ENCODE measurements at regions of chr18 and their contacts with region 1.

Region 1: GRCh38 chr18:69845593-69846506 is 101.8 kb downstream of the CD226 start:
- DNase-seq: peak in 2 of 9 donors; percentile 5 to 12
- ATAC-seq: no peak
- H3K4me3 ChIP-seq: no peak overlapping the region
- H3K4me3 Mint-ChIP-seq: no peak overlapping the region
- H3K27ac ChIP-seq: no peak overlapping the region
- H3K27ac Mint-ChIP-seq: peak overlapping the region in 1 of 9 donors; percentile 4
- H3K4me1 ChIP-seq: no peaks in the 10 kb centered on the region
- H3K4me1 Mint-ChIP-seq: peaks cover 0 to 3% (median 0%) of the 10 kb centered on the region in 7 donors
- H3K27me3 ChIP-seq: no peaks in the 10 kb centered on the region
- H3K27me3 Mint-ChIP-seq: no peaks in the 10 kb centered on the region

Region 2: DNA sequence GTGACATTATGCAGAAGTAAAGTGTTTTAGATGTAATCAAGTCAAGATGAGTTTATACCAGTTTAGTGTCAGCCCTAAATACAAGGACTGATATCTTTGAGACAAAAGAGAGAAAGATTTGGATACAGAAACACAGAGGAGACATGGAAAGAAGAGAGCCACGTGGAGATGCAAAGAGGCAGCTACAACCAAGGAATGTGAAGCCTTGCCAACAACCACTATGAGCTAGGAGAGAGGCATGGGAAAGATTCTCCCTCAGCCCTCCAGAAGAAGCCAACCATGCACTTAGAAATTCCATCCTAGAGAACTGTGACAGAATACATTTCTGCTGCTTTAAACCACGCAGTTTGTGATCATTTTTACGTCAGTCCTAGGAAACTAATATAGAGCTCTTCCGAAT is 228.0 kb before region 1 on chr18:
- CTCF ChIA-PET with region 1: no interaction called
- POLR2A ChIA-PET with region 1: no interaction called
- intact Hi-C with region 1: no loop called
- DNase-seq: no peak
- ATAC-seq: no peak
- H3K4me3 ChIP-seq: no peak overlapping the region
- H3K4me3 Mint-ChIP-seq: no peak overlapping the region
- H3K27ac ChIP-seq: no peak overlapping the region
- H3K27ac Mint-ChIP-seq: no peak overlapping the region
- H3K4me1 ChIP-seq: no peaks in the 10 kb centered on the region
- H3K4me1 Mint-ChIP-seq: no peaks in the 10 kb centered on the region
- H3K27me3 ChIP-seq: peaks cover 0 to 3% of the 10 kb centered on the region in 2 donors
- H3K27me3 Mint-ChIP-seq: peaks cover 0 to 13% (median 5%) of the 10 kb centered on the region in 5 donors

Region 3: DNA sequence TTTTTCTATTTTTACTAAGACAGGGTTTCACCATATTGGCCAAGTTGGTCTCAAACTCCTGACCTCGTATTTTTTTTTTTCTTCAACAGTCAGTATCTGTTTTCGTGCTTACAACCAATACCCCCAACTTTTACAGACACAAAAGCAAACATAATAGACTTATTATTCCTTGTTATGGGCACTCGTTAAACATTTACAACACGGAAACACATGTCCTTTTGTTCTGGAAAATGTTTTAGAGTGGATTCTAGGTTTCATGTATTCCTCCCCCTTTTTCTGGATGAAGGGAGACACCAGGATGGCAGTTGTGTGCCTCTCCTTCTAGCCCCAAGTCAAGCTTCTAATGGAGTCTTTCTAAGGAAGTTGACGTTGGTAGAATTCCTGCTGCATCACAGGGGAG is 13.0 kb after region 1 on chr18:
- CTCF ChIA-PET with region 1: no interaction called
- POLR2A ChIA-PET with region 1: no interaction called
- intact Hi-C with region 1: no loop called
- DNase-seq: no peak
- ATAC-seq: no peak
- H3K4me3 ChIP-seq: no peak overlapping the region
- H3K4me3 Mint-ChIP-seq: no peak overlapping the region
- H3K27ac ChIP-seq: no peak overlapping the region
- H3K27ac Mint-ChIP-seq: peak overlapping the region in 1 of 9 donors; percentile 33
- H3K4me1 ChIP-seq: no peaks in the 10 kb centered on the region
- H3K4me1 Mint-ChIP-seq: peaks cover 0 to under 1% (median 0%) of the 10 kb centered on the region in 7 donors
- H3K27me3 ChIP-seq: no peaks in the 10 kb centered on the region
- H3K27me3 Mint-ChIP-seq: no peaks in the 10 kb centered on the region

Region 4: DNA sequence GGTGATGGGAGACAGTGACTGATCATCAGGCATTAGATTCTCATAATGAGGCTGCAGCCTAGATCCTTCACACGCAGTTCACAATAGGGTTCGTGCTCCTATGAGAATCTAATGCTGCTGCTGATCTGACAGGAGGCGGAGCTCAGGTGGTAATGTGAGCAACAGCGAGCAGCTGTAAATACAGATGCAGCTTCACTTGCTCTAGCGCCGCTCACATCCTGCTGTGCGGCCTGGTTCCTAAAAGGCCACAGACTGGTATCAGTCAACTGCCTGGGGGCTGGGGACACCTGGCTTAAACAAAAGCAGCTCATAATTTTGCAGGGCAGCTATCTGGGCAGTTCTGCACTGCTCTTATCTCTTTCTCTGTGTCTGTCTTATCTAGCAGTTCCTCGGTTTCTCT is 122.2 kb after region 1 on chr18:
- CTCF ChIA-PET with region 1: no interaction called
- POLR2A ChIA-PET with region 1: no interaction called
- intact Hi-C with region 1: no loop called
- DNase-seq: peak in 5 of 9 donors; percentile 19 to 64 (median 51)
- ATAC-seq: peak; percentile 87
- H3K4me3 ChIP-seq: no peak overlapping the region
- H3K4me3 Mint-ChIP-seq: peak overlapping the region in 6 of 10 donors; percentile 3 to 36 (median 26)
- H3K27ac ChIP-seq: peak overlapping the region; percentile 51
- H3K27ac Mint-ChIP-seq: peak overlapping the region; percentile 3 to 93 (median 80)
- H3K4me1 ChIP-seq: peaks cover 3 to 12% of the 10 kb centered on the region in 2 donors
- H3K4me1 Mint-ChIP-seq: peaks cover 12 to 19% (median 17%) of the 10 kb centered on the region in 7 donors
- H3K27me3 ChIP-seq: no peaks in the 10 kb centered on the region
- H3K27me3 Mint-ChIP-seq: no peaks in the 10 kb centered on the region

Region 5: DNA sequence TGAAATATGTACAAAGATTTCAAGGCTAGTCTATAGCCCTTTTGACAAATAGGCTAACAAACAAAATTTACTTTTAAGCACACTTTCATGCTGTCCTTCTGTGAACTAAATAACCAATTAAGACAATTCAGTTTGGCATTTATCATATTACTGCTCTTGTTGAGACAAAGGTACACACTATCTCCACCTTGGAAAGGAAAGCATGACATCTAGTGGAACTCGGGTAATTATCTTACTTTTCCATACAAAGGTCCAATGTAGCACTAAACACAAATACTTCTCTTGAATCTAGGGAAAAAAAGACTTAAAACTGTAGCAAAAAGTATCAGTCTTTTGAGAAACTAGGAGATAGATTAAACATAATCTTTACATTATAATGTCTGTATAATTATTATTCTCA is 226.8 kb after region 1 on chr18:
- CTCF ChIA-PET with region 1: no interaction called
- POLR2A ChIA-PET with region 1: no interaction called
- intact Hi-C with region 1: loop called (anchors 1 to 5 kb)
- DNase-seq: peak in 3 of 9 donors; percentile 3 to 35 (median 3)
- ATAC-seq: no peak
- H3K4me3 ChIP-seq: no peak overlapping the region
- H3K4me3 Mint-ChIP-seq: no peak overlapping the region
- H3K27ac ChIP-seq: no peak overlapping the region
- H3K27ac Mint-ChIP-seq: no peak overlapping the region
- H3K4me1 ChIP-seq: no peaks in the 10 kb centered on the region
- H3K4me1 Mint-ChIP-seq: peaks cover 0 to 6% (median 4%) of the 10 kb centered on the region in 7 donors
- H3K27me3 ChIP-seq: no peaks in the 10 kb centered on the region
- H3K27me3 Mint-ChIP-seq: no peaks in the 10 kb centered on the region

Measured in naive thymus-derived CD4-positive, alpha-beta T cell (primary cell).